Right ventricle myocardium inferior (tissue), 1 donor: ENCODE measurements at regions of chr6 and their contacts with region 1.

Region 1: GRCh38 chr6:33886673-33887144 is 82.9 kb upstream of the MLN start:
- DNase-seq: no peak
- ATAC-seq: peak; percentile 90

Region 2: DNA sequence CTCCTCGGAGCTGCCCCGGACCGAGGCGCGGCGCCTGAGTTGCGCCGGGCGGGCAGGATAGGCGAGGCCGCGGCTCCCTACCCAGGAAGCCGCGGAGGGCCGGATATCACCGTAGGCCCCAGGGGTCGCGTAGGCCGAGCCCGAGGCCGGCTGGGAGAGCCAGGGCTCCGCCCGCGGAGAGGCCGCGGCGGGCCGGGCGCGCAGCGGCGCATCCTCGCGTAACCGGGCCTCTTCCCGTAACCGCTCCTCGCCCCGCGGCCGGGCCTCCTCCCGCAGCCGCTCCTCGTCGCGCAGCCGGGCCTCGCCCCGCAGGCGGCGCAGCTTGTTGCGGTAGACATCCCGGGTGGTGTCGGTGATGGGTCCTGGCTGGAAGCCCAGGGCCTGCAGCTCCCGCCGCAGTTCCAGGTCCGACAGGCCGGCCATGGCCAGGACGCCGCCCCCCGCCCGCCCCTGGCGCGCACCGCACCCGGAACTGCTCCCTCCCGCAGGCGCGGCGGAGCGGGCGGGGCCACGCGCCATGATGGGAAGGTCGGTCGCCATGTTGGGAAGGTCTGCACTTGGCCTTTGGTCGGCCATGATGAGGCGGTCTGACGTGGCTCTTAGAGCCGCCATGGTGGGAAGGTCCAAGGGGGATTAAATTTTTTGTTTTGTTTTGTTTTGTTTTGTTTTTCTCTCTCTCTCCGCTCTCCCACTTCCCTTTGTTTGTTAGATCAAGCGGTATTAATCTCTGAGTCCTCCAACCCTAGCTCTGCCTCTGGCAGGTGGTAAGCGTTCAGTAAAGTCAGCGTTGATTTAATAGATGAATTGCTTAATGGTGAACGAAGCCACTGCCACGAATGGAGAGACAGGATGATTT is 97.8 kb before region 1 on chr6 and contains the start of gene LEMD2:
- intact Hi-C with region 1: loop called (anchors 2 kb)
- DNase-seq: peak; percentile 97
- ATAC-seq: peak; percentile 98
- total RNA-seq, gene LEMD2: 23.2 TPM

Region 3: GRCh38 chr6:33827546-33828451 is 58.9 kb before region 1 on chr6:
- intact Hi-C with region 1: loop called (anchors 2 kb)
- DNase-seq: no peak
- ATAC-seq: no peak

Region 4: DNA sequence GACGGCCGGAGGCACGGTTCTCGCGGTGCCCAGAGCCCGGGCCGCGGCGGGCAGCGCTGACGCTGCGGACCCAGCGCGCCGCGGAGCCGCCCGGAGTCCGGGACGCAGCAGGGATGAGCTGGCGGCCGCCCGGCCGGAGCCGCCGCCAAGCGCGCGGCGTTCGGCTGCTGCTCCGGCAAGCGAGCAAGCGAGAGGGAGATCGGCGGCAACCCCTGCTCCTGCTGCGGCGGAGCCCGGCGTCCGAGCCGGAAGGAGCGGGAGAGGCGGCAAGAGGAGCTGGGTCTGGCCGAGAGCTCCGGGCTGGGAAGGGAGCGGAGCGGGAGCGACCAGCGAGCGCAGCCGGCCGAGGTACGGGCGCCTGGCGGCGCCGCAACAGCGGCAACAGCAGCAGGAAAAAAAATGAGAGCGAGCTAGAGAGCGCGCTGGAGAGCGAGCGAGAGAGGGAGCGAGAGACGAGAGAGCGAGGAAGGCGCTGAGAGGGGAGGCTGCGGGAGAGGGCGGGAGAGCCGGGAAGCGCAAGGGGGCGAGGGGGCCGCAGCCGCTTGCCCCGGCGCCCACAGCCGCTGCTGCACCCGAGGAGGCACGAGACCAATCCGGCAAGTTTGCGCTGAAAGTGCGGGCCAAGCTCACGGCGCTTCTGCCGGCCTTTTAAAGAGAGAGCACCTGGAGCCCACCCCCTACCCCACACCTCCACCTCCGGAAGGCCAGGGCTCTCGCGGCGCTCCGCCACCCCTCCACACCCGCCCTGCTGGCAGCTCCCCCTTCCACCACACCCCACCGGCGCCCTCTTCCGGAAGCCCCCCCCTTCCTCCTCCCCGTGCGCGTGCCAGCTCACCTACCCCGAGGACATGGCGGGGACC is 258.7 kb after region 1 on chr6:
- intact Hi-C with region 1: loop called (anchors 10 kb)
- DNase-seq: no peak
- ATAC-seq: no peak